Aorta (tissue), 5 donors: ENCODE measurements at regions of chr15 and their contacts with region 1.

Region 1: DNA sequence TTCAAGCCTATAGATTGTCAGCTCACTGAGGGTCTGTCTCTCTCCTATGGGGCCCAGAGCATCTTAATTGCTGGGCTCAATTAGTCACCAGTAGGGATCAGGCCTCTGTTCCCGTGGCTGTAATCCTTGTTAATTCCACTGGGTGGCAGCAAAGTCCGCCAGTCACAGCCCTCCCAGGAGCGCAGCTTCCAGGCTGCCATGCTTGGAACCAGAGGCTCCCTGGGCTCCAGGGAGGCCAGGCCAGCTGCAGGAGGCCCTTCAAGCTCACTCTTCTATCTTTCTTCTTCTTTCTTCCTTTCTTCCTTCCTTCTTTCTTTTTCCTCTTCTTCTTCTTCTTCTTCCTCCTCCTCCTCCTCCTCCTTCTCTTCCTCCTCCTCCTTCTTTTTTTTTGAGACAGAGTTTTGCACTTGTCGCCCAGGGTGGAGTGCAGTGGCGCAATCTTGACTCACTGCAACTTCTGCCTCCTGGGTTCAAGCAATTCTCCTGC is 14.4 kb downstream of the RNU5B-1 start:
- DNase-seq: peak; percentile 77 to 90
- ATAC-seq: peak; percentile 96
- H3K4me3 ChIP-seq: no peak overlapping the region
- H3K27ac ChIP-seq: no peak overlapping the region
- H3K4me1 ChIP-seq: no peaks in the 10 kb centered on the region
- H3K27me3 ChIP-seq: no peaks in the 10 kb centered on the region

Region 2: DNA sequence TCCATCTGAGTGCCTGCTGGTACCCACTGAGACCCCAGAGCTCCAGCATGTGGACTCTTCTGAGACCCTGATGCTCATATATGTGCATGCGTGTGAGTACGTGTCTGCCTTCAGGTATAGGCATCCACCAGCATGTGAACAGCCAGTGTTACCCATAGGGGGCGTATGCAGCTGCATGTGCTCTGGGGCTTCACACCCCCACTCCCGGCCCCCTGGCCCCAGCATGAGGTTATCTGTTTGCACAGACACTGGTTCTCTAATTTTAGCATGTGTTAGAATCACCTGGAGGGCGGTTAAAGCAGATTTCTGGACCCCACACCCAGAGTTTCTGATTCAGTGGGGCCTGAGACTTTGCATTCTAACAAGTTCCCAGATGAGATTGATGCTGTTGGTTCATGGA is 106.8 kb before region 1 on chr15:
- intact Hi-C with region 1: no loop called
- DNase-seq: no peak
- ATAC-seq: no peak
- H3K4me3 ChIP-seq: no peak overlapping the region
- H3K27ac ChIP-seq: no peak overlapping the region
- H3K4me1 ChIP-seq: no peaks in the 10 kb centered on the region
- H3K27me3 ChIP-seq: no peaks in the 10 kb centered on the region

Region 3: DNA sequence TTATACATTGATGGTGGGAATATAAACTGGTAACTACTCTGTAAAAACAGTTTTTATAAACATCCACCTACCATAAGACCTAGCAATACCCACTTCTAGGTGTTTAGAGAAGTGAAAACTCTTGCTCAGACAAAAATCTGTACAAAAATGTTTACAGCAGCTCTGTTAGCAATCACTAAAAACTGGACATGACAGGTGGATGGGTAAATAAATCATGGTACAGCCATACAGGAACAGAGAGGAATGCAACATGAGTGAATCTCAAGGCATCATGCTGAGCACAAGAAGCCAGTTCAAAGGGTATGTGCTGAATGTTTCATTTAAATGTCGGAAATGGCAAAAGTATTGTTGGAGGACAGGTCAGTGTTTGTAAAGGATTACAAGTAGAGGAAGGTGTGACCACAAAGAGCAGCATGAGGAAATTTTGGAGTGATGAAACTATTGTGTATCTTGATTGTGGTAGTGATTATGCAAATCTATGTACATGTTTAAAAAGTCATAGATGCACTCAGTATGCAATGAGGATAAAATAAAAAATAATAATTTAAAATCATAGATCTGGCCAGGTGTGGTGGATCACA is 25.9 kb before region 1 on chr15:
- intact Hi-C with region 1: no loop called
- DNase-seq: no peak
- ATAC-seq: no peak
- H3K4me3 ChIP-seq: no peak overlapping the region
- H3K27ac ChIP-seq: no peak overlapping the region
- H3K4me1 ChIP-seq: no peaks in the 10 kb centered on the region
- H3K27me3 ChIP-seq: no peaks in the 10 kb centered on the region

Region 4: DNA sequence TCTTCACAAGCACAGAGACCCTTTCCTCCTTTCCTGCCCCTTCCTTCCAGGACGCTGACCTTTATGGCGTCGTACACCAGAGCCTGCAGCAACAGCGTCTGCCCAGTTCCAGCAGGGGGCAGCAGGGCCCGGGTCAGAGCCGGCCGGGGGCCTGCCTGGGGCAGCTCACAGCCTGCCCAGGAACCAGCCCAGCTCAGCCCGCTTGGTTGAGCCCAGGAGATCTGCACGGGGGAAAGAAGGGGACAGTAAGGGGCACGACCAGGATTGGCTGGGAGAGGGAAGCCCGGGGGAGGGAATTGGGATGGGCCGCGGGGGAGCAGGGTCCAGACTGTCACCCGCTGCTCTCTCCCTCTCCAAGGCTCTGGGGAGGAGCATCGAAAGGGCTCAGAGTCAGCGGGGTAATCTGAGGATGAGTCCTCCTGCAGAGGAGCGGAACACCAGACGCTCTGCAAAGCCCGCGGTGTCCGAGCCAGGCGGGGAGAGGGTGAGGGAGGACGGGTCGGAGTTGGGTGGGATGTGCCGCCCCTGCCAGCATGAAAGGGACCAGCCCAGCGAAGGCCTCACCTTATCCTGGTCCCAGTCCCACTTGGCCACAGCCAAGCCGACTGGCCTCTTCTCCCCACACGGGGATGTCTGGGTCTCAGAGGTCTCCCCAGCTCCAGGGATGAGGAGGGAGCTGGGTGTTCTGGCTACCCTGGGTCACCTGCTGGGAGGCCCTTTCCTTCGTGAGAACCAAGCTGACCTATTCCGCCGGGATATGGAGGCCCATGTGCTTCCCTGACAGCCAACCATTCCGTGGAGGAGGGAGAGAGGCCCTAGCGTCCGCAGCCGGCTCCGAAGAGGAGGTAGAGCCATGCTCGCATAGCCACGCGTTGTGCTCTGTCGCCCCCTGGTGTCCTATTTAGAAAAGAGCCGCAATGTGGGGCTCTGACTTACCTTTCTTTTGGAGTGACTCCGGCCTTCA is 66.3 kb after region 1 on chr15:
- intact Hi-C with region 1: loop called (anchors 1 kb)
- DNase-seq: peak; percentile 88 to 92
- ATAC-seq: peak; percentile 94
- H3K4me3 ChIP-seq: no peak overlapping the region
- H3K27ac ChIP-seq: no peak overlapping the region
- H3K4me1 ChIP-seq: no peaks in the 10 kb centered on the region
- H3K27me3 ChIP-seq: no peaks in the 10 kb centered on the region